MCF 10A (cell line): ENCODE measurements at regions of chr7 and their contacts with region 1.

Region 1: DNA sequence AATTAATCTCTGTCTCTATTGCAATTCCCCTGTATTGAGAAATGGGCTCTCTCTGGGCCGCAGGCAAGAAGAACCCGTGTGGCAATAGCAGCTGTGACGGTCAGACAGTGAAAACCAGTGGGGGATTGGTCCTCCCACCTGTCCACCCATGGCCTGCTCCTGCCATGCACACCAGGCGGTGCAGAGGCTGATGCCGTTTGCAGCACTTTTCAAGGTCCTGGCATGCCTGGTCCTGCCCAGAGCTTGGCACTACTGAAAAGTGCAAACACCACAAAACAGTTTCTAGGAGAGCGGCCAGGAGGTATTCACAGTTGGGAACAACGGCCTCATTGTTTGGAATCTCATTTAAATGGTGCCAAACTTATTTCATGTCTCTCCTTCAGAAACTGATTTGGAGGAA is 41.5 kb downstream of the PSPH start:
- DNase-seq: peak; percentile 95
- H3K4me3 Mint-ChIP-seq: peak overlapping the region; percentile 44
- H3K27ac Mint-ChIP-seq: peak overlapping the region; percentile 77
- H3K4me1 Mint-ChIP-seq: peaks cover 14% of the 10 kb centered on the region
- H3K27me3 Mint-ChIP-seq: no peaks in the 10 kb centered on the region
- CTCF ChIP-seq: no peak

Region 2: GRCh38 chr7:55951637-55952351 is 57.9 kb before region 1 on chr7 and contains the start of gene MRPS17:
- CTCF ChIA-PET with region 1: no interaction called
- POLR2A ChIA-PET with region 1: no interaction called
- intact Hi-C with region 1: no loop called
- DNase-seq: peak; percentile 89
- H3K4me3 Mint-ChIP-seq: peak within 1 kb of the TSS; percentile 99
- H3K27ac Mint-ChIP-seq: peak within 1 kb of the TSS; percentile 99
- H3K4me1 Mint-ChIP-seq: no peaks in the 10 kb centered on the region
- H3K27me3 Mint-ChIP-seq: no peaks in the 10 kb centered on the region
- CTCF ChIP-seq: no peak
- total RNA-seq, gene MRPS17: 31.0 and 36.9 TPM in 2 replicates

Region 3: DNA sequence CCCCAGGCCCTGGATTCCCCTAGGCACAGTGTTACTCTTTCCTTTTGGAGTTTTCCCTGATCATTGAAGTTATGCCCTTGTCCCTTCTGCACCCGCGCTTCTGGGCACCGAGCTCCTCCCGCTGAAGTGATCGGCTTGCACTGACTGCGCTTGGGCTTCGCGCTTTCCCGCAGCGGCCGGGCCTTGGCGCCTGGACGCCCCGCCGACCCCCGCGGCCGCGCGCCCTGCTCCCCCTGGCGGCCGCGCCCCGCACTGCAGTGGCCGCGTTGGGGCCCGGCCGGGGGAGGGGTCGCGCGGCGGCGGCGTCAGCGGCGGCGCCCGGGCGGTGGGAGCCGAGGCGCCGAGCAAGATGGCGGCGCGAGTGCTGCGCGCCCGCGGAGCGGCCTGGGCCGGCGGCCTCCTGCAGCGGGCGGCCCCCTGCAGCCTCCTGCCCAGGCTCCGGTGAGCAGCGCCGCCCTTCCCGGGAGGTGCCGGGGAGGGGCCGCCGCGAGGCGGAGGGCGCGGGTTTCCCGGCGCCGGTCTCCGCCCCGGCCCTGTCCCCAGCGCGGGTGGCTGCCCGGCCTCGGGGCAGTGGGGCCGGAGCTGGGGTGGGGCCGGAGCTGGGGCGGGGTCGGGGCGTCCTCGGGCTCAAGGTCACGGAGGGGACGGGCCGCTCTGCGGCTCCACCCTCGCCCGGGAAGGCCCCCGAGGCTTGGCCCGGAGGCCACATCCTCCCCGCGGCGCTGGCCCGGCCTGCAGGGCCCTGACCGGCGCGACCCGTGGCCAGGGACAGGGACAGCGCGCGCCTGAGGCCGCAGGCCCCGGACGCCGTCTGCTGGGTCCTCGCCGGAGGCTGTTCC is 45.2 kb before region 1 on chr7 and contains the start of gene NIPSNAP2:
- CTCF ChIA-PET with region 1: interaction called, 4 read pairs
- POLR2A ChIA-PET with region 1: interaction called, 32 read pairs
- intact Hi-C with region 1: no loop called
- DNase-seq: peak; percentile 49
- H3K4me3 Mint-ChIP-seq: peak within 1 kb of the TSS; percentile 70
- H3K27ac Mint-ChIP-seq: peak within 1 kb of the TSS; percentile 78
- H3K4me1 Mint-ChIP-seq: peaks cover 25% of the 10 kb centered on the region
- H3K27me3 Mint-ChIP-seq: no peaks in the 10 kb centered on the region
- CTCF ChIP-seq: peak; percentile 49
- total RNA-seq, gene NIPSNAP2: 57.9 and 62.8 TPM in 2 replicates

Region 4: DNA sequence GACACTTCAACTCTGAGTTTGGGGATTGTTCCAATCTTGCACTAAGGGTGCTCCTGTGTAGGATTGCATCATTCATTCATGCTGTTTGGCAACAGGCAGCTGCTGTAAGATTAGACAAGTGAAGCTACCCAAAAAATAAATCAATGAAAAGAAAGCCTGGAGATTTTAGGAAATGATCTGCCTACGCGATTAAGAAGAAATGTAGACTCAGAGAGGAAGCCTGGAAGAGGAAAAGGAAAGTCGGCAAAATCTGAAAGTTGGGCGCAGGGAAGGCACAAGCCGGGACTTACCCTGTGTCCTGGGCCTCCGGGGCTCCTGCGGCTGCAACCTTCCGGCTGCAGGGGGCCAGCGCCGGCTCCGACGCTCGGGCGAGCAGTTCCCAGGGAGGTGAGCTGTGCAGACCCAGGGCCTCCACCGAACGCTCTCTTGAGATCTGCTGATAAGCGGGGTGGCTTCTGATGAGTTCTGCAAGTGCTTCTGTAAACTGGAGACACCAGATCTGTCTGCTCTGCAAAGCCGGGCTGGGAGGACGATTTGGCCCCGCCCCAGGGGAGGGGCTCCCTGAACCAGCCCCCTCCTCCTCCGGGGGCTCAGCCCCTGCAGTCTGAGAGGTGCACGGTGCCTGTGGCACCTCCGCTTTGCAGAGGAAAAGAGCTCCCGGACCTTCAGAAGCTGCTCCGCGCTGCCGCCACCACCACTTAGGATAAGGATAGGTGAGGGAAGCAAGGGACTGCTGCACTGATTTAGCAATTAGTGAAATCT is 24.2 kb after region 1 on chr7:
- CTCF ChIA-PET with region 1: interaction called, 7 read pairs
- POLR2A ChIA-PET with region 1: interaction called, 11 read pairs
- intact Hi-C with region 1: no loop called
- DNase-seq: peak; percentile 85
- H3K4me3 Mint-ChIP-seq: peak overlapping the region; percentile 71
- H3K27ac Mint-ChIP-seq: peak overlapping the region; percentile 4
- H3K4me1 Mint-ChIP-seq: peaks cover 8% of the 10 kb centered on the region
- H3K27me3 Mint-ChIP-seq: no peaks in the 10 kb centered on the region
- CTCF ChIP-seq: peak; percentile 37

Region 5: DNA sequence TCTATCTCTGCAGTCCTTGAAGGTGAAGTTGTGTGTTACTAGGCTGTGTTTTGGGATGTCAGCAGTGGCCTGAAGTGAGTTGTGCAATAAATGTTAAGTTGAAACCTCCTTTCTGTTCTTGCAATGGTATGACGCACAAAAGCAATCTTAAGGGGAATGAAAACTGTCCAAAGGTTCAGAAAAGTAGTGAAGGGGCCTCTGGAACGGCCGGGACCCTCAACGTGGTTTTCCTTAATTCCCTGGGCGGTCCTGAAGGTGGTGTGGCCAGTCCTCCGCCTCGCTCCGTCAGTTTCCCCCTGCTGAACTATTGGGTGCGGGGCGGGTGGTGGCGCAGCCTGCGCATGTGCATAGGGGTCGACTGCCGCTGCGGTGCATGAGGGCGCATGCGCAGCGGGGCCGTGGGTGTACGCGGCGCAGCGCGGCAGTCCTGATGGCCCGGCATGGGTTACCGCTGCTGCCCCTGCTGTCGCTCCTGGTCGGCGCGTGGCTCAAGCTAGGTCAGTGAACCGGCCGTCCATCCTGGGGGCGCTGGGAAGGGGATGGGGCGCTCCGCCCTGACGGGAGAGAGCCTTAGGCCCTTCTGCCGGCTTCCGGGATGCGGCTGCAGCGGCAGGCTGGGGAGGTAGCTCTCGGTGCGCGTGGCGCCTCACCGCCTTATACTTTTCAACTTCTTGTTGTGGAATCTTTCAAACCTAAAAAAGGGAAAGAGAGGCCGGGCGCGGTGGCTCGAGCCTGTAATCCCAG is 54.4 kb after region 1 on chr7 and contains the start of gene SUMF2:
- CTCF ChIA-PET with region 1: interaction called, 8 read pairs
- POLR2A ChIA-PET with region 1: interaction called, 18 read pairs
- intact Hi-C with region 1: no loop called
- DNase-seq: peak; percentile 90
- H3K4me3 Mint-ChIP-seq: peak within 1 kb of the TSS; percentile 82
- H3K27ac Mint-ChIP-seq: peak within 1 kb of the TSS; percentile 84
- H3K4me1 Mint-ChIP-seq: peaks cover 30% of the 10 kb centered on the region
- H3K27me3 Mint-ChIP-seq: no peaks in the 10 kb centered on the region
- CTCF ChIP-seq: no peak
- total RNA-seq, gene SUMF2: 142 and 159 TPM in 2 replicates